ENCODE measurements at regions of chr7 and their contacts with region 1.

Region 1: GRCh38 chr7:149624419-149625339 is 127.1 kb upstream of the ZNF746 start:
- DNase-seq: peak; percentile 94
- H3K4me3 Mint-ChIP-seq: peak overlapping the region; percentile 83
- H3K27ac Mint-ChIP-seq: peak overlapping the region; percentile 79
- H3K4me1 Mint-ChIP-seq: peaks cover 46% of the 10 kb centered on the region
- H3K27me3 Mint-ChIP-seq: peaks cover 5% of the 10 kb centered on the region

Region 2: GRCh38 chr7:149245244-149245643 is 379.4 kb before region 1 on chr7:
- CTCF ChIA-PET with region 1: no interaction called
- POLR2A ChIA-PET with region 1: interaction called, 5 read pairs
- intact Hi-C with region 1: loop called (anchors 5 kb)
- DNase-seq: peak; percentile 82
- H3K4me3 Mint-ChIP-seq: peak overlapping the region; percentile 43
- H3K27ac Mint-ChIP-seq: peak overlapping the region; percentile 91
- H3K4me1 Mint-ChIP-seq: peaks cover 66% of the 10 kb centered on the region
- H3K27me3 Mint-ChIP-seq: no peaks in the 10 kb centered on the region

Region 3: DNA sequence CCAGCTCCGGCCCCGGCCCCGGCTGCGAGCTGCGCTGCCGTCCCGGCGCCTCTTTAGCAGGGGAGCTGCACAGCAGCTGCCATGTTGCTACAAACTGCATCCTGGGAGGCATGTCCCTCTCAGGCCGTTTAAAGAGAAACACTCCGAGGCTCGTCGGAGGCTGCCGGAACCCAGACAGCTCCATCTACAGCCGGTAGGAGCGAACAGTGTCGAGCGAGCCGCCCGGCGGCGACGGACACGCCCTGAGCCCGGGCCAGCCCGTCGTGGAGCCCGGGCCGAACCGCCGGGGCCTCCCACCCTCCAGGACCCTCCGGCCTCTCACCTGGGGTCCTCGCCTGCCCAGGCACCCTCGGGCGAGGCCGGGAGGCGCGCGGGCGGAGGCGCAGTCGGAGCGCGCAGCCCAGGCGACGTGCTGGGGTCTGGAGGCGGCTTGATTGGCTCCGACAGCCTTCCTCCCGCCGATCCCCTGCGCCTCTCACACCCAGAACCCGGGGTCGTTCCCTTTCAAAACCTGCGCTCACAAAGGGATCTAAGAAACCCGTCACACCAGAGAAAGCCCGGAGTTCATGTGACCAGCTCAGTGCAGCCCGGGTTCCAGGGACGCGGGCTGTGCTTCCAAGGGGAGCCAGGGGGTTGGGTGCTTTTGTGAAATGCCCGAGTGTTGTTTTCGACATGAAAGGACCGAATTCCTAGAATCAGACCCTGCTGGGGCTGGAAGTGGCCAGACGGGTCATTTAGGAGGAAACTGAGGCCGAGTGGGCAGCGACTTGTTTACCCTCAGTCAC is 164.0 kb before region 1 on chr7 and contains the start of gene ZNF777:
- CTCF ChIA-PET with region 1: interaction called, 13 read pairs
- POLR2A ChIA-PET with region 1: interaction called, 4 read pairs
- intact Hi-C with region 1: loop called (anchors 1 kb)
- DNase-seq: peak; percentile 88
- H3K4me3 Mint-ChIP-seq: peak within 1 kb of the TSS; percentile 82
- H3K27ac Mint-ChIP-seq: peak within 1 kb of the TSS; percentile 44
- H3K4me1 Mint-ChIP-seq: peaks cover 19% of the 10 kb centered on the region
- H3K27me3 Mint-ChIP-seq: peaks cover 2% of the 10 kb centered on the region
- total RNA-seq, gene ZNF777: 10.1 to 11.4 TPM

Region 4: DNA sequence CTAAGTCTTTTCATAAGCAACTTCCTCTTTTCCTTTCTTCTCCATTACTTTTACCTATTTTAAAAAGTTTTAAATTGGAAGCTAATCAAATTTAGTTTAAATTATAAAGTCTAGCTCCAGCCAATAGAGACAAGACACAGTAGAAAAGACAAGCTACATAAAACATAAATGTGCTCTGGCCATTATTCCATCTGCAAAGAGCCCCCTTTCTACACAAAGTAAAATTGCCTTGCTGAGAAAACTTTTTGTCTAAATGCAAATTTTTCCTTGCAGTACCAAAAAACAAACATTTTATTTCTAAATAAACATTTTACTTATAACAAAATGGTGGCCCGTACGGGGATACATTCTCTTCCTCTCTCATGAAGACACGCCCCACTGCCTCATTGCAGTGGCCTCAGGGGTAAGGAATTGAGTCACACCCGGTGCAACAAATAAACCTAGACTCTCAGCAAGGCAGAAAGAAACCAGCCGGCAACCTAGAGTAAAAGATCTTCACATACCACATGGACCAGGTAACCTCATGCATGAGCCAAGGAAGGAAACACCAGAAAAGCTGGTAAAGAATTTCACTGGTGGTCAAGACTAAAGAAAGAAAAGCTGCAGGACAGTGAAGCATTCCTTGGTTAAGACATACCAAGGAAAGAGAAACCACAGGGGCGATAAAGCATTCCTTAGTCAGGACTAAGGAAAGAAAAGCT is 55.5 kb before region 1 on chr7:
- CTCF ChIA-PET with region 1: no interaction called
- POLR2A ChIA-PET with region 1: no interaction called
- intact Hi-C with region 1: no loop called
- DNase-seq: no peak
- H3K4me3 Mint-ChIP-seq: no peak overlapping the region
- H3K27ac Mint-ChIP-seq: no peak overlapping the region
- H3K4me1 Mint-ChIP-seq: peaks cover 13% of the 10 kb centered on the region
- H3K27me3 Mint-ChIP-seq: no peaks in the 10 kb centered on the region

Region 5: DNA sequence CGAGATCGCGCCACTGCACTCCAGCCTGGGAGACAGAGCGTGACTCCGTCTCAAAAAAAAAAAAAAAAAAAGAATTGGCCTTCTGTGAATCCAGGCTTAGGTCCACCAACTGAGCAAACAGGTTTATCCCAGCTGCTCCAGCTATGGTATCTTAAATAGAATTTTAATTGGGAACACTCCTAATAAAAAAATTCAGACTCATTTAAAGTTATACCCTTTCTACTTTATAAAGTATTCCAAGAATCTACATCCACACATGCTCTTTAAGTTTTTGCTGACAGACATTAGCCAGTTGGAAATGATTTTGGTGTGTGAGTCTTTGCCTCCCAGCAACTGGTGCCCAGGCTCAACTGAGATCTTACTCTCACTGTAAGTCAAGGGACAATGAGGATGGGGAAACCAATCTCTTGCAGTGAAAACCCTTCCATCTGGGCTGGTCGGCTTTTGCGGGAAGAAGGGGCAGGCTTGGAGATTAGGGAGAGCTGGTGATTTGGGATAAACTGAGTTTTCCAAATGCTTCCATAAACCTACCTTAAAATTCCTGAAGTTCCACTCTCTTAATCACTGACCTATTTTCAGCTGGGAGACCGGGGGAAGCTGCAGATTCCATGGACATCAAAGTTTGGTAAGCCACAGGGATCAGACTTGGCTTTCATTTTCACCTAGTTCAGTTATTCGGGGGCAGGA is 37.9 kb before region 1 on chr7:
- CTCF ChIA-PET with region 1: no interaction called
- POLR2A ChIA-PET with region 1: no interaction called
- intact Hi-C with region 1: loop called (anchors 5 kb)
- DNase-seq: no peak
- H3K4me3 Mint-ChIP-seq: no peak overlapping the region
- H3K27ac Mint-ChIP-seq: no peak overlapping the region
- H3K4me1 Mint-ChIP-seq: peaks cover 10% of the 10 kb centered on the region
- H3K27me3 Mint-ChIP-seq: no peaks in the 10 kb centered on the region

Region 6: GRCh38 chr7:149714050-149714909 is 89.6 kb after region 1 on chr7:
- CTCF ChIA-PET with region 1: interaction called, 4 read pairs
- POLR2A ChIA-PET with region 1: no interaction called
- intact Hi-C with region 1: loop called (anchors 2 kb)
- DNase-seq: peak; percentile 94
- H3K4me3 Mint-ChIP-seq: peak overlapping the region; percentile 74
- H3K27ac Mint-ChIP-seq: peak overlapping the region; percentile 38
- H3K4me1 Mint-ChIP-seq: peaks cover 17% of the 10 kb centered on the region
- H3K27me3 Mint-ChIP-seq: no peaks in the 10 kb centered on the region

Measured in activated CD4-positive, alpha-beta memory T cell treated with anti-CD3 and anti-CD28 coated beads for 36 hours (primary cell).